GM13976 (cell line): ENCODE measurements at regions of chr17 and their contacts with region 1.

Region 1: DNA sequence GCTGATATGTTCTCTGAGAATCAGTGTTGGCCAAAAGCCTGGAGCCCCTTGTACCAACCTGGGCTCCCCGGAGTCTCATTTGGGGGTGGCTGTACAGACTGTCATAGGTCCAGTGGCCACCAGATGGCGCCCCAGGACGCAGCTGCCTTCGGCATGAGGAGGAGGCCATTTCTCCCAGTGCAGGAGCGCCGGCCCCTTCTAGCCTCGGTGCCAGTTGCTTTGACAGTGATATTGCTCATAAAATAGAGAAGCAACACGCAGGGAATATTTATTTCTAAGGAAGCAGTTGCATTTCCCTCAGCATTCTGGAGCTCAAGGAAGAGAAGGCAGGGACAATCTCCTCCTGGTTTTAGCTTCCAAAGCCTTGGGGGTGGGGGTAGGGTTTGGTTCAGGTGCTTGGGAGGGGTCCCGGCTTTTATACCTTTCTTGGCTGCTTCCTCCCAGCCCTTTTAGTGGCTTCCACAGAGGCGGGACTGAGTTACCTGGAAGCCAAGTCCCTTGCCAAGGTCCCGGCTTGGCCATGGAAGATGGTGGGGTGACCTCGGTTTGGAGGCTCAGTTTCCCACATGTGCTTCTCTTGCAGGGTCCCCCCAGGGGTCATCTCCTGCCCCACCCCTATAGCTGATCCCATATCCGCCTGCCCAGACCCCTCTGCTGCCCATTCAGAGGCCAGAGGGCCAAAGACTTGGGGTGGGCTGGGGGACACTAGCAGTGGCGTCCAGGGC is 117.8 kb upstream of the CDC42EP4 start:
- DNase-seq: peak; percentile 92
- CTCF ChIP-seq: peak; percentile 97

Region 2: DNA sequence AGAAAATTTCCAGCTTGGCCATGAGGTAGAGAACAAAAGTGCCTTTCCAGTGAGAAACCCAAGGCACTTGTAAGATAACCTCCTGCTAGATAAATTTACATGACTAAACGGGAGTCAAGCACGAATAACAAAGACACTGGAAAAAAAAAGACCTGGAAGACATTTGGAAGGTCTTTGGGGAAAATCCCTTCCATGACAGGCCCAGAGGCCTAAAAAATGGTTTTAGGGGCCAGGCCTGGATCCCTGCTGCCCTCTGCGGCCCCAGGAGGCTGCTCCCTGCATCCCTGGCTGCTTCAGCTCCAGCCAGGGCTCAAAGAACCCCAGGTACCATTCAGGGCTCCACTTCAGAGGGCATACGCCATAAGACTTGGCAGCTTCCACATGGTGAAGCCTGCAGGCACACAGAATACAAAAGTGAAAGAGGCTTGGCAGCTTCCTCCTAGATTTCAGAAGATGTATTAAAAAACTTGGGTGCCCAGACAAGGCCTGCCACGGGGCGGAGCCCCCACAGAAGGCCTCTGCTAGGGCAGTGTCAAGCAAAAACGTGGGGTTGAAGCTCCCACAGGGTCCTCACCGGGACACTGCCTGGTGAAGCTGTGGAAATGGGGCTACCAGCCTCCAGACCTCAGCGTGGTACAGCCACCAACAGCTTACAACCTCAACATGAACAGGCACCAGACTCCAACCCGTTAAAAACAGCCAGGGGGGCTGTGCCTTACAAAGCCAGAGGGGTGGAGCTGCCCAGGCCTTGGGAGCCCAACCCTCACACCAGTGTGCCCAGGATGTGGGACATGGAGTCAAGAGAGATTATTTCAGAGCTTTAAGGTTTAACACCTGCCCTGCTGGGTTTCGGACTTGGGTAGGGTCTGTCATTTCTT is 137.5 kb after region 1 on chr17:
- in situ Hi-C with region 1: no loop called
- DNase-seq: no peak
- CTCF ChIP-seq: no peak

Region 3: DNA sequence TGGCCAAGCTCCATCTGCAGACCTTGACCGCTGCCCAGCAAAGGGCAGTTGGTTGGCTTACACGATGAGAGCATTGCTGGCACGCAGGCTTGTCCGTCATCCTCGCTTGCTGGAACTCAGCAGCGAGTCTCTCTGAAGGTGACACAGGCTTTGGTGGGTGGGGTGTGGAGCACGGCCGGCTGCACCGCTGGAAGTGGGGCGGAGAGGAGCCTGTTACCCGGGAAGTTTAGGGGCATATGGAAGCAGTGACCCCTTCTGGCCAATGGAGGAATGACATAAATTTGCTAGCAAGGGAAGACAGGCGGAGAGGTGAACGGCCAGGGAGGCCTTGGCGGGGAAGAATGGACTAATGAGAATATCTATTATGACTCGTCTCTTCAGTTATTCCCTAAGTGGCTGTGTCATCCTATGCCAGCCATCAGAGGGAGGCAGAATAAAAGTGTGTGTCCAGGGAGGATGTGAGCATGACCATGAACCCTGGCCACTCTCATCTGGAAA is 280.5 kb after region 1 on chr17:
- in situ Hi-C with region 1: loop called (anchors 25 kb)
- DNase-seq: peak; percentile 81
- CTCF ChIP-seq: peak; percentile 65